ENCODE measurements at regions of chr19 and their contacts with region 1.

Region 1: GRCh38 chr19:8631425-8631819 is 989 bp downstream of the NFILZ start:
- DNase-seq: no peak
- H3K4me3 ChIP-seq: no peak overlapping the region; a peak in 1 of 8 replicates
- H3K27ac ChIP-seq: no peak overlapping the region
- H3K4me1 ChIP-seq: peaks cover 2 to 10% (median 8%) of the 10 kb centered on the region in 4 experiments; a peak in 6 of 7 replicates
- H3K27me3 ChIP-seq: no peaks in the 10 kb centered on the region
- CTCF ChIP-seq: no peak
- EP300 ChIP-seq: no peak
- POLR2A ChIP-seq: no peak
- RAD21 ChIP-seq: no peak

Region 2: DNA sequence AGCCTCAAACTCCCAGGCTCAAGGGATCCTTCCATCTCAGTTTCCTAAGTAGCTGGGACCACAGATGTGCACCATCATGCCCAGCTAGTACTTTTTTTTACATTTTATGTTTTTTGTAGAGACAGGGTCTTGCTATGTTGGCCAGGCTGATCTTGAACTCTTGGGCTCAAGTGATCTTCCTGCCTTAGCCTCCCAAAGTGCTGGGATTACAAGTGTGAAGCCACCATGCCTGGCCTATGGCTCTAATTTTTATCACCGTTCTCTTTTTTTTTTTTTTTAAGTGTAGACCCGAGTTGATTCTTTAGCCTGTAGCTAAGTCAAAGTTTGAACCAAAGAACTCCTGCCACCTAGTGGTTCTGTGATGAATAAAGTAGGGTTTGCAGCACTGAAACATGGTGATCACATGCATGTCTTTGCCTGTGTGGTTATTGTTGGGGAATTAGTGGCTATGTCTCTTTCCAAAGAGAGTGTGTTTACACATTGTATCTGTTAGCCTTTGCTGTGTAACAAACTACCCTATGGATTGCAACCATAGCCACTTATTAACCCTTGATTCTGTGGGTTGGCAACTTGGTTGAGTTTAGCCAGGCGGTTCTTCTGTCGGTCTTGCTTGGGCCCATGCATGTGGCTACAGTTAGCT is 10.6 kb after region 1 on chr19:
- CTCF ChIA-PET with region 1: interaction called, 45 read pairs
- POLR2A ChIA-PET with region 1: no interaction called
- DNase-seq: no peak
- H3K4me3 ChIP-seq: no peak overlapping the region
- H3K27ac ChIP-seq: no peak overlapping the region
- H3K4me1 ChIP-seq: no peaks in the 10 kb centered on the region
- H3K27me3 ChIP-seq: peaks cover 0 to 13% (median 8%) of the 10 kb centered on the region in 4 experiments; a peak in 3 of 7 replicates
- CTCF ChIP-seq: peak in 2 of 3 experiments; percentile 59 to 65; a peak in 3 of 4 replicates
- EP300 ChIP-seq: no peak
- POLR2A ChIP-seq: no peak
- RAD21 ChIP-seq: peak; percentile 59 to 66

Region 3: GRCh38 chr19:8702350-8702749 is 70.9 kb after region 1 on chr19:
- CTCF ChIA-PET with region 1: no interaction called
- POLR2A ChIA-PET with region 1: no interaction called
- DNase-seq: no peak
- H3K4me3 ChIP-seq: no peak overlapping the region
- H3K27ac ChIP-seq: no peak overlapping the region
- H3K4me1 ChIP-seq: no peaks in the 10 kb centered on the region
- H3K27me3 ChIP-seq: no peaks in the 10 kb centered on the region; a peak in 1 of 7 replicates
- CTCF ChIP-seq: no peak
- EP300 ChIP-seq: no peak
- POLR2A ChIP-seq: no peak
- RAD21 ChIP-seq: no peak